ENCODE measurements at regions of chr13 and their contacts with region 1.

Region 1: DNA sequence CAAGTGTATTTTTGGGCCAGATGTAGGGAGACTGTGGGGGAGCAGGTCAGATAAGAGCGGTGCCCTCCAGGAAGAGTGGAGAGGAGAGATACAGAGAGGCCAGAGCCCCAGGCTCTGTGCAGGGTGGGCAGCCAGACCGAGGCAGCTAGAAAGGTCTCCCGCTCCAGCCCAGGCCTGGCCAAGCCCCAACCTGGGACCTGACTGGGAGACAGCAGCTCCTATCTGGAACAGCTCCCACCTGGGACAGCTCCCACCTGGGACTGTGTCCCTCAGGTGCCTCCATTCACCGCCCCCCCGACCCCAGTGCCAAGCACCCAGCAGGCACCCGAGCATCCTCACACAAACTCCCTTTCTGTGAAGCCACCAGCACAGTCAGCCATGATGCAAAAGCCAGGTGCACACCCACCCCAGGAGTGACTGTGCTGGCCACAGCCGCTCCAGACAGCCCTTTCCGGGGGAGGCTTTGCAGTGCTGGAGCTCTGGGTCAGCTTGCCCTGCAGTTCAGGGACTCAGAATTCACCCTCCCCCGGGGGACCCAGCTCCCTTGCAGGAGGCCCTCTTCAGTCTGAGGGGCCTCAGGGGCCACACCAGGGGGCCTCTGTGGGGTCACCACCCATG is 2.1 kb upstream of the GRTP1 start:
- DNase-seq: no peak
- H3K4me3 ChIP-seq: no peak overlapping the region
- H3K27ac ChIP-seq: no peak overlapping the region
- H3K27me3 ChIP-seq: peaks cover 14% of the 10 kb centered on the region
- CTCF ChIP-seq: no peak

Region 2: GRCh38 chr13:111488466-111489132 is 1877.5 kb before region 1 on chr13:
- CTCF ChIA-PET with region 1: no interaction called
- POLR2A ChIA-PET with region 1: interaction called, 14 read pairs
- DNase-seq: no peak
- H3K4me3 ChIP-seq: no peak overlapping the region
- H3K27ac ChIP-seq: no peak overlapping the region
- H3K27me3 ChIP-seq: no peaks in the 10 kb centered on the region
- CTCF ChIP-seq: no peak

Region 3: DNA sequence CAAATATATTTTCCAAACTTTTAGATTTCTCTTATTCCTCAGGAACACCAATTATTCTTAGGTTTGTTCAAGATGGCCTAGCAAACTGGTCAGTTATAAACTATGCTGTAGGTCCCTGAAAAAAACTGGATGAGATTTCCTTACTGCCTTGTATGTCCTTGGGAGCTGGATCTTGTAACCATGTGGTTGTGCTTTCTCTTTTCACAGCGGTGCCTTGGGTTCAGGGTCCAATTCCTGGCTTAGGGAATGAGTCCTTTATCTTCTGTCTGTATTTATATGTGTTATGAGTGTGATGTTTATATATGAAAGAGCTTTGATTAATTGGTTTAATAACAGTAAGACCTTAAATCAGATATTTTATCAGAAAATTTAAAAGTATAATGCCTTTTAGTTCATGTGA is 21.3 kb after region 1 on chr13:
- CTCF ChIA-PET with region 1: interaction called, 11 read pairs
- POLR2A ChIA-PET with region 1: no interaction called
- DNase-seq: no peak
- H3K4me3 ChIP-seq: no peak overlapping the region
- H3K27ac ChIP-seq: no peak overlapping the region
- H3K27me3 ChIP-seq: peaks cover 5% of the 10 kb centered on the region
- CTCF ChIP-seq: no peak

Region 4: DNA sequence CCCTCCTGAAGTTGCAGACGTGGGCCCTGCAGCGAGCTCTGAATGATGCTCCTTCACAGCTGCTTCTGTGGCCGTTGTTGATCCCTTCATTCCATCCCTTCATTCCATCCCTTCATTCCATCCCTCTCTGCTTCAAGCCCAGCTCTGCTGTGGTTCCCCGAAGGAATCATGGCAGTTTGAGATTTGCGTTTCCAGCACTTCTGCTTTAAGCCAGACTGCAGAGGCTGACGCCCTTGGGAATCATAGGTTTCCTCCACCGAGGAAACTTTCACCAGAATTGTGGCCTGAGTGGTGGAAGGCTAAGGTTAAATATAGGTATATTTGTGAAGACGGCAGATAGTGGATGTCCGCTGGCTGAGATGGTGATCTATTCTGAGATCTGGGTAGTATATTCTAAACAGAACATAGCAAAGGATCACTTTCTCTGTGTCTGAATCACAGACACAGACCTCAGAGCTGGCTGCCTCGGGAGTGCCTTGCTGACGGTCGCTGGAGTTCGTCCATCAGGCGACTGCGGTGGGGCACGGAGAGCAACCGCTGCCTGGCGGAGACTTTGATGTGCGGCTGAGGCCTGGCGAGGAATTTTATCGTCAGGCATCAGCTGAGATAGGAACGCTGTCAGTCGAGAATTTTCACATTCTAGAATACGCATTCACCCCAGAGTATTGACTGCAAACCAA is 167.2 kb after region 1 on chr13:
- CTCF ChIA-PET with region 1: no interaction called
- POLR2A ChIA-PET with region 1: no interaction called
- DNase-seq: no peak
- H3K4me3 ChIP-seq: no peak overlapping the region
- H3K27ac ChIP-seq: peak overlapping the region; percentile 31
- H3K27me3 ChIP-seq: no peaks in the 10 kb centered on the region
- CTCF ChIP-seq: no peak

Measured in AG04450 (cell line).